GM12878 (cell line): ENCODE measurements at regions of chr6 and their contacts with region 1.

Region 1: GRCh38 chr6:111764238-111765175 is 108.7 kb downstream of the FYN start:
- DNase-seq: peak; percentile 94
- ATAC-seq: peak; percentile 83
- H3K4me3 ChIP-seq: peak overlapping the region; percentile 24; the same call in 1 of the 2 replicates
- H3K27ac ChIP-seq: peak overlapping the region; percentile 93
- H3K4me1 ChIP-seq: peaks cover 88% of the 10 kb centered on the region
- H3K27me3 ChIP-seq: no peaks in the 10 kb centered on the region
- CTCF ChIP-seq: no peak
- EP300 ChIP-seq: peak; percentile 74 to 89; a peak in 2 of 4 replicates
- POLR2A ChIP-seq: no peak; the same call in 1 of the 2 replicates
- RAD21 ChIP-seq: 0 out of 2 replicates have a peak, but pooled peaks have one; percentile 16

Region 2: DNA sequence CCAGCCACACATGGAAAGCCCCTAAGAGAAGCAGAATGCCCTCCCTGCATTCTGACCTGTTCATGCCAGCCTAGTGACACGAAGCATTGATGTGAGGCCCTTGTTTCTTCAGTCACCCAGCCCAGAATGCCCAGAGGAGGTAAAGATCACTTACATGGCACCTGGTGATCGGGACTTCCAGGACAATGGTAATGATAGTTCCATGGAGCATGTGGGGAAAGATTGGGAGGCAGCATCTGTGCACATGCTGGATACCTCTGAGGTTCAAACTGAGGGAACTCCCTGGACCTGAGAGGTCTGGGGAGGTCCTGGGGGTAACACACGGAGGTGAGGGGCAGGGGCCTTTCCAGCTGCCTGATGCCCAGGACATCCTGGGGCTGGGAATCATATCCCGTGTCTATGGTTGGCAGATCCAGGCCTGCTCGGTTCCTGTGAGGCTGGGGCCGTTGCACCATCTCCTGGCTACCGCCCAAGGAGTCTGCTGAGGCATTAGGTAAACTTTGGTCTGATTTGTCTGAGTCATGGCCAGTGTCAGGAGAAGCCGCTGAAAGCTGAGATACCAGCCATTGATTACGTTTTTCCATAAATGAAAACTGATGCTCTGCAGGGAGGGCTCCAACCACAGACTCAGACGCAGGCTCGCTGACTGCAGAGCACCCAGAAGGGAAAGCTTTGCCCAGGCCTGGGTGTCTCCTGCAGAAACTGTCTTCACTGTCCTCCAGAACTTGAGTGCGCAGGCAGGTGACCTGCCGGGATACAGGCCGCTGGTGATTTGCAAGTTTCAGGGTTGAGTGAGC is 173.2 kb before region 1 on chr6:
- CTCF ChIA-PET with region 1: no interaction called
- POLR2A ChIA-PET with region 1: no interaction called
- RAD21 ChIA-PET with region 1: no interaction called
- SMC1A ChIA-PET with region 1: no interaction called
- in situ Hi-C with region 1: no loop called
- intact Hi-C with region 1: no loop called
- DNase-seq: no peak
- ATAC-seq: peak; percentile 59; the same call in 2 of the 3 replicates
- H3K4me3 ChIP-seq: no peak overlapping the region
- H3K27ac ChIP-seq: no peak overlapping the region
- H3K4me1 ChIP-seq: no peaks in the 10 kb centered on the region
- H3K27me3 ChIP-seq: no peaks in the 10 kb centered on the region
- CTCF ChIP-seq: no peak
- EP300 ChIP-seq: no peak
- POLR2A ChIP-seq: no peak
- RAD21 ChIP-seq: no peak

Region 3: DNA sequence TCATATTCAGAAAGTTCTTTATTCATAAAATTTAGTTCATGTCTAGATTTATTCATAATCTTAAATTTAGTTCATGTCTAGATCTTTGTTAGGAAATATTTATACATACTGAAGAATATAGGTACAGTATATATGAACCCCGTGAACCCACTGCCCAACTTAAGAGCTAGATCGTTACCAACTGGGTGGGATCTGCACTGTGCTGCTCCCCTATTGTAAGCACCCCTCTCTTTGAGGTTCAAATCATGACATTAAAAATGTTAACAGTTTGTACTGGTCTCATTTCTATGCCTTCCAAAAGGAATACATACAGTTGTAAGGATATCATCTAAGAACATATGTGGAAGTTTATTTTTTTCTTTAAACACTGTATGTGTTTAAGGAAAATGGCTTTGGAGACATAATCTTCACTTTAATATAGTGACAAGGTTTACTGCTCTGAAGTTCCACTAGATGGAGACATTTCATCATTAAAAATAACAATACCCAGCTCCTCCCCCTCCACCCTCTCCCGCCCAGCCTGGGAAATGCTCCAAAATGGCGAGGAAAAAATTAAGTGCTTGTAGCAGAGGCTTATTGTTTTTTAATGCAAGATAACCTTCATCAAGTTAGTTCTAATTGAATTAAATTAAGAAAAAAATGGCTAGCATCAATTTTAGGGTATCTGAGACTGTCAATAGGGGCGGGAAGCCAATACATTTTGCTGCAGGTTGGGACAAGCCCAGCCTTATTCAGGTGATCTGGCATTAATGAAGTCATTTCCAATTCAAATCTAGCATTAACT is 54.7 kb before region 1 on chr6:
- CTCF ChIA-PET with region 1: interaction called, 11 read pairs
- POLR2A ChIA-PET with region 1: no interaction called
- RAD21 ChIA-PET with region 1: interaction called, 46 read pairs
- SMC1A ChIA-PET with region 1: interaction called, 28 read pairs
- in situ Hi-C with region 1: no loop called
- intact Hi-C with region 1: no loop called
- DNase-seq: peak; percentile 33
- ATAC-seq: peak; percentile 97
- H3K4me3 ChIP-seq: no peak overlapping the region
- H3K27ac ChIP-seq: peak overlapping the region; percentile 13; the same call in 1 of the 2 replicates
- H3K4me1 ChIP-seq: peaks cover 5% of the 10 kb centered on the region; the same call in 1 of the 2 replicates
- H3K27me3 ChIP-seq: no peaks in the 10 kb centered on the region
- CTCF ChIP-seq: peak; percentile 45 to 76 (median 62); a peak in 4 of 6 replicates
- EP300 ChIP-seq: no peak
- POLR2A ChIP-seq: no peak
- RAD21 ChIP-seq: peak; percentile 91

Region 4: GRCh38 chr6:111737065-111737521 is 27.4 kb before region 1 on chr6:
- CTCF ChIA-PET with region 1: interaction called, 43 read pairs
- POLR2A ChIA-PET with region 1: interaction called, 69 read pairs
- RAD21 ChIA-PET with region 1: interaction called, 158 read pairs
- SMC1A ChIA-PET with region 1: interaction called, 156 read pairs
- in situ Hi-C with region 1: no loop called
- intact Hi-C with region 1: loop called (anchors 1 kb)
- DNase-seq: no peak
- ATAC-seq: no peak
- H3K4me3 ChIP-seq: no peak overlapping the region
- H3K27ac ChIP-seq: 0 out of 2 replicates have a peak overlapping the region, but pooled peaks have one; percentile 6
- H3K4me1 ChIP-seq: peaks cover 80% of the 10 kb centered on the region
- H3K27me3 ChIP-seq: no peaks in the 10 kb centered on the region
- CTCF ChIP-seq: no peak
- EP300 ChIP-seq: no peak
- POLR2A ChIP-seq: no peak
- RAD21 ChIP-seq: no peak

Region 5: DNA sequence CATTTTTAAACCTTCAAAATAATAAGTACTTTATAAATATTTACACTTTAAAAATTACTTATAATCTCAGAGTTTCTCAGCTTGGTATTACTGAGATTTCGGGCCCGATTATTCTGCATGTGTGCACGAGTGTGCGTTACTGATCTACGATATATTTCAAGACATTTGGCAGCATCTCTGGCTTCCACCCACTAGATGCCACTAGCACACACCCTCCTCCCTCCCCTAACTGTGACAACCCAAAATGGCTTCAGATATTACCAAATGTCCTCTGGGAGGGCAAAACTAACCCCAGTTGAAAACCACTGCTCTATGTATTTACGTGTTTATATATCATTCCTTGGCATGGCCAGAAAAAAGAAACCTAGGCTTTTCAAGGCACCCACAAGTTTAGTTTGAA is 12.8 kb after region 1 on chr6:
- CTCF ChIA-PET with region 1: interaction called, 16 read pairs
- POLR2A ChIA-PET with region 1: interaction called, 9 read pairs
- RAD21 ChIA-PET with region 1: interaction called, 46 read pairs
- SMC1A ChIA-PET with region 1: interaction called, 50 read pairs
- in situ Hi-C with region 1: no loop called
- intact Hi-C with region 1: no loop called
- DNase-seq: no peak
- ATAC-seq: peak; percentile 82
- H3K4me3 ChIP-seq: no peak overlapping the region
- H3K27ac ChIP-seq: peak overlapping the region; percentile 61
- H3K4me1 ChIP-seq: peaks cover 22% of the 10 kb centered on the region
- H3K27me3 ChIP-seq: no peaks in the 10 kb centered on the region
- CTCF ChIP-seq: peak; percentile 39 to 50 (median 43); a peak in 4 of 6 replicates
- EP300 ChIP-seq: no peak
- POLR2A ChIP-seq: no peak
- RAD21 ChIP-seq: peak; percentile 72

Region 6: GRCh38 chr6:111818539-111819226 is 54.2 kb after region 1 on chr6:
- CTCF ChIA-PET with region 1: interaction called, 3 read pairs
- POLR2A ChIA-PET with region 1: no interaction called
- RAD21 ChIA-PET with region 1: interaction called, 10 read pairs
- SMC1A ChIA-PET with region 1: interaction called, 18 read pairs
- in situ Hi-C with region 1: no loop called
- intact Hi-C with region 1: no loop called
- DNase-seq: no peak
- ATAC-seq: peak; percentile 31
- H3K4me3 ChIP-seq: no peak overlapping the region
- H3K27ac ChIP-seq: no peak overlapping the region; the same call in 1 of the 2 replicates
- H3K4me1 ChIP-seq: peaks cover 16% of the 10 kb centered on the region
- H3K27me3 ChIP-seq: no peaks in the 10 kb centered on the region
- CTCF ChIP-seq: no peak
- EP300 ChIP-seq: no peak
- POLR2A ChIP-seq: no peak
- RAD21 ChIP-seq: no peak

Region 7: DNA sequence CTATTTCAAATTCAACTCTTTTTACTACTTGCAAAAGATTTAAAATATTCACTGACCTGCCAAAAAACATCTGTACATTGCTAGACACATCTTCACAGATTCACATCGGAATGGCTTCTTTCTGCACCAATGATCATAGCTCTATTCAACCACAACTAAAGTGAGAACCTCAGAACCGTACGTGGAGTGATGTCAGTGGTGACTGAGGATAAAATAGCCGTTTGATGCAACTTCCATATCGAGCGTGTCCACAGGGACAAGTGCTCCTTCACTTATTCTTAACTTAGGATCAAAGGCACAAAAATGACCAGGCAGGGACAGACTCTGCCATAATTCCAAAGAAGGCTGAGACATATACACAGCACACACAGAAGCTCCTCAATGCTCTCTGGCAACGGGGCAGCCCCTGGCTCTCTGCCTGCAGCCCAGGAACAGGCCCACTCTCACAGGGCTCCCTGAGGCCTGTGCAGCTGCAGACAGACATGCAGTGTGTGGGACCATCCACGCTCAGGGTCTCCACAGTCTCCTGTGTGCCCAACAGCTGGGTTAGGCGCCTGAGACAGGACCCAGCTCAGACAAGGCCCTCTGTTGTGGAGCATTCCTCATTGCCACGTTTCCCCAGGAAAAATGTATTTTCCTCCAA is 85.9 kb after region 1 on chr6:
- CTCF ChIA-PET with region 1: interaction called, 25 read pairs
- POLR2A ChIA-PET with region 1: interaction called, 19 read pairs
- RAD21 ChIA-PET with region 1: interaction called, 35 read pairs
- SMC1A ChIA-PET with region 1: interaction called, 55 read pairs
- in situ Hi-C with region 1: no loop called
- intact Hi-C with region 1: no loop called
- DNase-seq: no peak
- ATAC-seq: peak; percentile 73
- H3K4me3 ChIP-seq: no peak overlapping the region
- H3K27ac ChIP-seq: peak overlapping the region; percentile 60; the same call in 1 of the 2 replicates
- H3K4me1 ChIP-seq: peaks cover 40% of the 10 kb centered on the region
- H3K27me3 ChIP-seq: no peaks in the 10 kb centered on the region
- CTCF ChIP-seq: no peak
- EP300 ChIP-seq: 0 out of 4 replicates have a peak, but pooled peaks of 1 of the 2 experiments have one; percentile 23
- POLR2A ChIP-seq: no peak
- RAD21 ChIP-seq: no peak

Region 8: GRCh38 chr6:111989743-111990142 is 225.2 kb after region 1 on chr6:
- CTCF ChIA-PET with region 1: interaction called, 10 read pairs
- POLR2A ChIA-PET with region 1: interaction called, 9 read pairs
- RAD21 ChIA-PET with region 1: interaction called, 14 read pairs
- SMC1A ChIA-PET with region 1: interaction called, 8 read pairs
- in situ Hi-C with region 1: no loop called
- intact Hi-C with region 1: no loop called
- DNase-seq: no peak
- ATAC-seq: peak; percentile 74
- H3K4me3 ChIP-seq: no peak overlapping the region
- H3K27ac ChIP-seq: peak overlapping the region; percentile 75
- H3K4me1 ChIP-seq: peaks cover 43% of the 10 kb centered on the region
- H3K27me3 ChIP-seq: no peaks in the 10 kb centered on the region
- CTCF ChIP-seq: no peak
- EP300 ChIP-seq: no peak
- POLR2A ChIP-seq: no peak
- RAD21 ChIP-seq: peak; percentile 12; the same call in 1 of the 2 replicates

Region 9: GRCh38 chr6:112085286-112086065 is 321.0 kb after region 1 on chr6:
- CTCF ChIA-PET with region 1: no interaction called
- POLR2A ChIA-PET with region 1: no interaction called
- RAD21 ChIA-PET with region 1: no interaction called
- SMC1A ChIA-PET with region 1: no interaction called
- in situ Hi-C with region 1: no loop called
- intact Hi-C with region 1: no loop called
- DNase-seq: no peak
- ATAC-seq: no peak
- H3K4me3 ChIP-seq: no peak overlapping the region
- H3K27ac ChIP-seq: no peak overlapping the region
- H3K4me1 ChIP-seq: no peaks in the 10 kb centered on the region
- H3K27me3 ChIP-seq: no peaks in the 10 kb centered on the region
- CTCF ChIP-seq: no peak
- EP300 ChIP-seq: no peak
- POLR2A ChIP-seq: no peak
- RAD21 ChIP-seq: no peak